Calu3 (cell line): ENCODE measurements at regions of chr12 and their contacts with region 1.

Region 1: GRCh38 chr12:64610149-64610678 is at the start of gene RASSF3:
- DNase-seq: peak; percentile 93
- H3K4me3 Mint-ChIP-seq: peak within 1 kb of the TSS; percentile 79
- H3K27ac Mint-ChIP-seq: peak within 1 kb of the TSS; percentile 84
- H3K4me1 Mint-ChIP-seq: peaks cover 23% of the 10 kb centered on the region
- H3K27me3 Mint-ChIP-seq: no peaks in the 10 kb centered on the region
- CTCF ChIP-seq: no peak
- total RNA-seq, gene RASSF3: 162 and 179 TPM in 2 replicates

Region 2: DNA sequence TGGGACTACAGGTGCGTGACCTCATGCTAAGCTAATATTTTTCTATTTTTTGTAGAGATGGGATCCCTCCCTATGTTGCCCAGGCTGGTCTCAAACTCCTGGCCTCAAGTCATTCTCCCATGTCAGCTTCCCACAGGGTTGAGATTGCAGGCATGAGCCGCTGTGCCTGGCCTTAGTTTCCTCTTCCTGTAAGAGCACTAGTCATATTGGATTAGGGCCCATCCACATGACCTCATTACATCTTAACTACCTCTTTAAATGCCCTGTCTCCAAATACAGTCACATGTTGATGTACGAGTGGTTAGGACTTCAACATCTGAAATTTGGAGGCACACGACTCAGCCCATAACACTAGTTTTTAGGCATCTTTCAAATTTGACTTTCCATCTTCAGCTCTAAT is 72.1 kb before region 1 on chr12:
- CTCF ChIA-PET with region 1: no interaction called
- intact Hi-C with region 1: no loop called
- DNase-seq: no peak
- H3K4me3 Mint-ChIP-seq: no peak overlapping the region
- H3K27ac Mint-ChIP-seq: no peak overlapping the region
- H3K4me1 Mint-ChIP-seq: no peaks in the 10 kb centered on the region
- H3K27me3 Mint-ChIP-seq: peaks cover 25% of the 10 kb centered on the region
- CTCF ChIP-seq: no peak

Region 3: GRCh38 chr12:64550755-64551154 is 59.5 kb before region 1 on chr12:
- CTCF ChIA-PET with region 1: interaction called, 7 read pairs
- intact Hi-C with region 1: loop called (anchors 2 kb)
- DNase-seq: no peak
- H3K4me3 Mint-ChIP-seq: no peak overlapping the region
- H3K27ac Mint-ChIP-seq: no peak overlapping the region
- H3K4me1 Mint-ChIP-seq: peaks cover 21% of the 10 kb centered on the region
- H3K27me3 Mint-ChIP-seq: no peaks in the 10 kb centered on the region
- CTCF ChIP-seq: no peak

Region 4: GRCh38 chr12:64625243-64626077 is 15.2 kb after region 1 on chr12:
- CTCF ChIA-PET with region 1: interaction called, 19 read pairs
- intact Hi-C with region 1: loop called (anchors 2 kb)
- DNase-seq: peak; percentile 85
- H3K4me3 Mint-ChIP-seq: peak overlapping the region; percentile 53
- H3K27ac Mint-ChIP-seq: peak overlapping the region; percentile 90
- H3K4me1 Mint-ChIP-seq: peaks cover 54% of the 10 kb centered on the region
- H3K27me3 Mint-ChIP-seq: no peaks in the 10 kb centered on the region
- CTCF ChIP-seq: no peak

Region 5: GRCh38 chr12:64672925-64673409 is 62.8 kb after region 1 on chr12:
- CTCF ChIA-PET with region 1: interaction called, 14 read pairs
- intact Hi-C with region 1: loop called (anchors 2 kb)
- DNase-seq: peak; percentile 85
- H3K4me3 Mint-ChIP-seq: peak overlapping the region; percentile 43
- H3K27ac Mint-ChIP-seq: peak overlapping the region; percentile 83
- H3K4me1 Mint-ChIP-seq: peaks cover 91% of the 10 kb centered on the region
- H3K27me3 Mint-ChIP-seq: no peaks in the 10 kb centered on the region
- CTCF ChIP-seq: no peak

Region 6: DNA sequence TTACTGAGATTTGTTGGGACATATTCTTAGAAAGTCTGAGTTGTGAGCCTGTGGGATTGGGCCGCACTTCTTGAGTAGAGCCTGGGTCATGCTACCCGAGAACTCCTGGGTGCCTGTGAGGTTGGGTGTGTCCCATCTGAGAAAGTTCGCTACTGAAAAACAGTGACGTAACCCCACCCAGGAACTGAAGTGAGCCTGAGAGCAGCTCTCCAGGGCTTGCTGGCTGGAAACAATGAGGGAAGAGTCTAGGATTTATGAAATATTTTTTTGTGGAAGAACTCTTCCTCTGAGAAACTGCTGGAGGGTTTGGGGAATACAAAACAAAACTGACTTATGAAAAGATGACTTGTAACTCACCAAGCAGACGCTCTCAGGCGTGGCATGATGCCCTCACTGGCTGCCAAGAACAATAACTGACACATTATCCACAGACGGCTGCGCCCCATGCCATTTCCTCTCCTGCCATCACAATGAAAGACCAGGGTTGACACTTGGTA is 69.3 kb after region 1 on chr12:
- CTCF ChIA-PET with region 1: interaction called, 14 read pairs
- intact Hi-C with region 1: no loop called
- DNase-seq: peak; percentile 71
- H3K4me3 Mint-ChIP-seq: peak overlapping the region; percentile 59
- H3K27ac Mint-ChIP-seq: peak overlapping the region; percentile 82
- H3K4me1 Mint-ChIP-seq: peaks cover 77% of the 10 kb centered on the region
- H3K27me3 Mint-ChIP-seq: no peaks in the 10 kb centered on the region
- CTCF ChIP-seq: no peak

Region 7: DNA sequence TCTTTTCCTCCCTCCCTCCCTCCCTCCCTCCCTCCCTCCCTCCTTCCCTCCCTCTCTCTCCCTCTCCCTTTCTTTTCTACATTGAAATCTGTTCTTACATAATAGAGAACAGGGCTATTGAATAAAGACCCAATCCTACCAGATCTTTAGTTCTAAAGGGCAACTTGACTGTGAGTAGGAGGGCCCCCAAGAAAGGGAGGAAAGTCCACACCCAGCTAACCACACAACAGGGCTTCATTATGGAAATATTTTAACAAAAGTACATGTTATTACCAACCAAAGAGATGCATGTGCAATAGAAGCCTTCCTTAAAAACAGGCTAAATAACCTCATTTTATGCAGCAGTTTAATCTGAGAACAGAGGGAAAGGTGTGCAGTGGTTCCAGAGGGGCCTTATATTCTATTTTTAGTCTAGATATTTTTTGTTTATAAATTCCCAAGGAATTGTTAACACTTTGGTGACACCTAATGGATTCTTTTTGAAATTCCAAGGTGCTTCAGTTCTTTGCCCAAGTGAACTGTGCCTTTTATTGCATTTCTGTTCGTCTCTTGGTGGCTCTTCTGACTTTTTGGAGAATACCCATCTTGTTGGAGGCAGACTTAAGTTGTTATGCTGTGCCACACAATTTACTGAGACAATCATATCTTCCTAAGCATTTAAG is 86.0 kb after region 1 on chr12:
- CTCF ChIA-PET with region 1: interaction called, 5 read pairs
- intact Hi-C with region 1: loop called (anchors 2 kb)
- DNase-seq: no peak
- H3K4me3 Mint-ChIP-seq: no peak overlapping the region
- H3K27ac Mint-ChIP-seq: no peak overlapping the region
- H3K4me1 Mint-ChIP-seq: peaks cover 32% of the 10 kb centered on the region
- H3K27me3 Mint-ChIP-seq: no peaks in the 10 kb centered on the region
- CTCF ChIP-seq: peak; percentile 12